Heart left ventricle (tissue), 16 donors: ENCODE measurements at regions of chr4 and their contacts with region 1.

Region 1: GRCh38 chr4:4248029-4248884 is at the start of gene TMEM128:
- DNase-seq: peak; percentile 93 to 94 (median 93)
- ATAC-seq: peak; percentile 92 to 99 (median 98)
- H3K4me3 ChIP-seq: peak within 1 kb of the TSS; percentile 57 to 96 (median 74)
- H3K27ac ChIP-seq: peak within 1 kb of the TSS; percentile 80 to 99 (median 91)
- H3K4me1 ChIP-seq: peaks cover 0 to 28% (median 19%) of the 10 kb centered on the region in 12 donors
- H3K27me3 ChIP-seq: no peaks in the 10 kb centered on the region
- CTCF ChIP-seq: peak in 5 of 12 donors; percentile 17 to 40 (median 31)
- POLR2A ChIP-seq: peak in 1 of 2 donors; percentile 63
- total RNA-seq, gene TMEM128: 5.1 to 15.5 (median 12.4) TPM

Region 2: DNA sequence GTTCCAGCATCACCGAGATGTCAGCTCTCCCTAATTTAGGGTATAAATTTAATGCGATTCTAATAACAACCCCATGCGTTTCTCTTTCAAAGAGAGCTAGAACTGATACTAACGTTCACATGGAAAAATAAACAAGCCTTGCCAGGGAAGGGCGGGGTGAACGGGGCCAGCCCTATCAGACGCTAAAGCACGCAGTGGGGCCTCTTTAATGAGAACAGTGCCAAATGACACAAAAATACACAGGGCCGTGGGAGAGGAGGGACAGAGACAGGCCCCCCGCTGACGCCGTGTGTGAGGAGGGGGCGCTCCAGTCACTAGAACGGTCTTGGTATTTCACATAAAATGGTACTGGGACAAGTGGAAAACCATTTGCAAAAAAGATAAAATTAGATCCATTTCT is 503.4 kb before region 1 on chr4:
- intact Hi-C with region 1: no loop called
- DNase-seq: no peak
- ATAC-seq: no peak
- H3K4me3 ChIP-seq: no peak overlapping the region
- H3K27ac ChIP-seq: no peak overlapping the region
- H3K4me1 ChIP-seq: peaks cover 0 to 4% (median 0%) of the 10 kb centered on the region in 12 donors
- H3K27me3 ChIP-seq: peaks cover 14 to 65% (median 43%) of the 10 kb centered on the region in 9 donors
- CTCF ChIP-seq: no peak
- POLR2A ChIP-seq: no peak

Region 3: DNA sequence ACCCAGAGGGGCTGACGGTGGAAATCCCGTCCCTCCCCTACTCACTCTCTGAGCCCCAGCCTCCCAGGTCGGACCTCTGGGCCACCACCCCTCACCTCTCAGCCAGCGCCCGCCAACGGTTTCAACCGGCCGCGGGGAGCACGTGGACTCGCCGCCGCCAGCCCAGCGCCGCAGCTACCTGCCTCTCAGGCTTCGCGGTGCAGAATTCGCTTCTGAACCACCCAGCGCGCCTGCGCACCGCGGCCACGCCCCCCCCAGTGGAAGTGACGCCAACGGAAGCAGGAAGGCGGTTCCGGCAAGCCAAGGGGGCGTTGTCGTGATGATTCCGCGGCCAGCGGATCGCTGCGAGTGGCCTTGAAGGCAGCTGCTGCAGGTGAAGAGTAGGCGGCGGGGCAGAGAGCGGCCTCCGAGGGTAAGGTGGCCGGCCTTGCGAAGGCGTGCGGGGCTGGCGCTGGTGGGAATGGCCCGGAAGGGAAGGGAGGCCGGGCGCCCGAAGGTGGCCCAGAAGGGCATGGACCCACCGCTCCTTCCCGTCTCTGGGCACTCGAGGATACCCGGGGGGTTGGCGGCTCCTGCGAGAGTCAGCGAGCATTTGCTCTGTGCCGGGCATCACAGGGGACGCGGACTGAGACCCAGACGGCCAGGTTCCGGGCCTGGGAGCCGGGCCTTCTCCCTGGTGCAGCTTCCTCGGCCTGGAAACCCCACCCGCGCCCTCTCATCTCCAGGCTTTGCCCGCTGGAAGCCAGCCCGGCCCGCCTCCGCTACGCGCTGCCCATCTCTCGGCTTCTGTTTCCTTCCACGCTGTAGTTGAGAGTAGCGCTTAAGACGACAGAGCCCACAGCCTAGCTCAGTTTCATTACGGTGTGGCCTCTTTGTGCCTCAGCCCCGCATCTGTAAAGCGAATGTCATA is 41.9 kb after region 1 on chr4 and contains the starts of genes LYAR and ZBTB49:
- intact Hi-C with region 1: loop called in 5 of 10 experiments (anchors 2 to 5 kb)
- DNase-seq: peak; percentile 91 to 97 (median 95)
- ATAC-seq: peak; percentile 90 to 98 (median 96)
- H3K4me3 ChIP-seq: peak within 1 kb of the TSS; percentile 65 to 97 (median 88)
- H3K27ac ChIP-seq: peak within 1 kb of the TSS in 11 of 12 donors; percentile 77 to 88 (median 84)
- H3K4me1 ChIP-seq: peaks cover 0 to 50% (median 24%) of the 10 kb centered on the region in 12 donors
- H3K27me3 ChIP-seq: no peaks in the 10 kb centered on the region
- CTCF ChIP-seq: peak in 2 of 12 donors; percentile 11 to 12
- POLR2A ChIP-seq: peak in 1 of 2 donors; percentile 71
- total RNA-seq, gene LYAR: 8.6 to 15.6 (median 12.2) TPM
- total RNA-seq, gene ZBTB49: 2.9 to 6.7 (median 4.7) TPM

Region 4: DNA sequence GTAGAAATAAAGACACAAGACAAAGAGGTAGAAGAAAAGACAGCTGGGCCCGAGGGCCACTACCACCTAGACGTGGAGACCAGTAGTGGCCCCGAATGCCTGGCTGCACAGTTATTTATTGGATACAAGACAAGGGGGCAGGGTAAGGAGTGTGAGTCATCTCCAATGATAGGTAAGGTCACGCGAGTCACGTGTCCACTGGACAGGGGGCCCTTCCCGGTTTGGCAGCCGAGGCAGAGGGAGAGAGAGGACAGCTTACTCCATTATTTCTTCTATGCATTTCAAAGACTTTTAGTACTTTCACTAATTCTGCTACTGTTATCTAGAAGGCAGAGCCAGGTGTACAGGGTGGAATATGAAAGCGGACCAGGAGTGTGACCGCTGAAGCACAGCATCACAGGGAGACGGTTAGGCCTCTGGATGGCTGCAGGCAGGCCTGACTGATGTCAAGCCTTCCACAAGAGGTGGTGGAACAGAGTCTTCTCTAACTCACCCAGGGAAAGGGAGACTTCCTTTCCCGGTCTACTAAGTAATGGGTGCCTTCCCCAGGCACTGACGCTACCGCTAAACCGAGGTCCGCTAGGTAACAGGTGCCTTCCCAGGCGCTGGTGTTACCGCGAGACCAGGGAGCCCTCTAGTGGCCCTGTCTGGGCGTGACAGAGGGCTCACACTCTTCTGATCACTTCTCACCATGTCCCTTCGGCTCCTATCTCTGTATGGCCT is 86.7 kb after region 1 on chr4:
- intact Hi-C with region 1: loop called in 9 of 10 experiments (anchors 1 to 5 kb)
- DNase-seq: peak; percentile 42 to 76 (median 65)
- ATAC-seq: peak in 3 of 4 donors; percentile 25 to 57 (median 44)
- H3K4me3 ChIP-seq: no peak overlapping the region
- H3K27ac ChIP-seq: no peak overlapping the region
- H3K4me1 ChIP-seq: peaks cover 0 to 10% (median 4%) of the 10 kb centered on the region in 12 donors
- H3K27me3 ChIP-seq: peaks cover 0 to 6% (median 0%) of the 10 kb centered on the region in 9 donors
- CTCF ChIP-seq: peak; percentile 58 to 89 (median 76)
- POLR2A ChIP-seq: no peak